Posterior vena cava (tissue), 2 donors: ENCODE measurements at regions of chr15 and their contacts with region 1.

Region 1: DNA sequence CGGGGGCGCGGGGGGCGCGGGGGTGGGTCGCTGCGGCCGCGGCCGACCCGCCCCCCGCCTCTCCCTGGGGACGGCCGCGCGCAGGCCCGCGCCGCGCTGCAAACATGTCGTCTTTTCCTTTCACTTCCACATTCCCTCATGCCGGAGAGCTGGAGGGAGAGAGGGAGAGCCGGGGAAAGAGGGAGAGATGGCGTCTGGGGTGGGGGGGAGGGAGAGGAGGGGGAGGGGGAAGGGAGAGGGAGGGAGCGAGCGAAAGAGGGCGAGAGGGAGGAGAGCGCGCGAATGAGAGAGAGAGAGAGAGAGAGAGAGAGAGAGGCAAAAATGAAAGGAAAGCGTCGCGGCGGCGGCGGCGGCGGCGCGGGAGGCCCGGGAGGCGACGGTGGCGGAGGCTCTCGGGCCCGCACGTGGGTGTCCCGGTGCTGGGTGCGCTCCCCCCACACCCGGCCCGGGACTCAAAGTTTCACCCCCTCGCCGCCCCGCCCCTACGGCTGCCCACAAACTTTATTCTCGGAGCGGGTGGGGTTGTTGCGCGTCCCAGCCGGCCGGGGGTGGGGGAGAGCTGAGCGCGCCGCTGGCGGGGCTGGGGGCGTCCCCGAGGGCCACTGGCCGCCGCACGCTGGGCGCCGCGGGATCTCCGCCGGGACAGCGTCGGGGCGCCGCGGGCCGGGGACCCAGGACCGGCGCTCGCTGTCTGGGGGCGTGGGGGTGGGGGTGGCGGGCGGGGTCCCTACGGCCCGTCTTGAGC is 731 bp downstream of the ZNF710 start:
- DNase-seq: peak; percentile 89

Region 2: DNA sequence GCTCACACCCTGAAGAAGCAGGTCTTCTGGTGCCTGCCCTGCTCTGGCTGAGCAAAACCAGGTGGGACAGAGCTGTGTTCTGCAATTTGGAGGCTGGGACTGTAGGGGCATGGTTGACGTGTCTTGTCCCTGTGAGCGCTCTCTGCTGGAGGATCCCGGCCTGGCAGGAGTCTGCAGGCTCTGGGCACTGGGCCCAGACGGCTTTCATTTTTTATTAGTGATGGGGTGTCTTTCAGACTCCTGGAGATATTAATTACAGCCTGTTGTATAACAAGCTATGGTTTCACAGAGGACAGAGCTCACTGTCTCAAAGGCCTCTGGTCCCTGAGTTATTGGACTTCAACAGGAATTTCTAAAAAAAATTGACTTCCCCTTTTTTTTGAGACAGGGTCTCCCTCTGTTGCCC is 30.3 kb before region 1 on chr15:
- intact Hi-C with region 1: no loop called
- DNase-seq: peak; percentile 71

Region 3: DNA sequence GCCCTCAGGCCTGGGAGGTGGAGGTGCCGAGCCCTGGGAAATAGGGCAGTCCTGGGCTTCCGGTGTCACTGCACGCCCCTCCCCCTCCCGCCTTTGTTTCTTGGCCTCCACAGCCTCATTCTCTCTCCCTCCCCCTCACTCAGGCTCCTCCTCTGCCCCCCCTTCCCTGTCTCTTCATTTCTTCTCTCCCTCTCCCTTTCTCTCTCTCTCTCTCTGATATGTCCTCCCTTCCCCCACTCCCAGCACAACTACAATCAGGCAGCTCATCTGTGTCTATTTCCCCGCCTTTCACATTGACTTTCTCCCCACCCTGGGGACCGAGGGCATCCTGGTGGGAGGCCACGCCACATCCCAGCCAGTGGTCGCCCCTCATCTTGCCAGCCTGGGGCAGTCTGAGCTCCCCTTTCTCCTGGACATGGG is 60.2 kb after region 1 on chr15:
- intact Hi-C with region 1: loop called in 1 of 2 experiments (anchors 10 kb)
- DNase-seq: no peak

Region 4: DNA sequence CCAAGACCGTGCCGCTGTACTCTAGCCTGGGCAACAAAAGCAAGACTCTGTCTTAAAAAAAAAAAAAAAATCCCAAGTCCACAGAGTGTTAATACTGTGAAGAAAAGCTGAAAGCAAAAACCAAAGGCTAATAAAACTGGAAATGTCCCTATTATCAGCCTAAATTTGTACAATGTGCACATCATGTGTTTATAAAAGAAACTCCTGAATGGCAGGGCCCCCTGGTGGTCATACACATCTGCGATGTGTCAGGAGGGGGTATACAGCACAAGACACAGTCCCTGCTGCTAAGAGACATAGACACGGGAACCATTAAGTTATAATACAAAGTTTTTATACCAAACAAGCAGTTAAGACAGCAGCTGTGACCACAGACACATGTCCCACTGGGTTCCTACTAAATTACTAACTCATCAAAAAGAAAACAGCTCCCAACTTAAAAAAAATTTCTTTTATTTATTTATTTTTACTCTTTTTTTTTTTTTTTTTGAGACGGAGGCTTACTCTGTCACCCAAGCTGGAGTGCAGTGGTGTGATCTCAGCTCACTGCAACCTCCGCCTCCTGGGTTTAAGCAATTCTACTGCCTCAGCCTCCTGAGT is 69.5 kb after region 1 on chr15:
- intact Hi-C with region 1: loop called (anchors 5 to 10 kb)
- DNase-seq: peak; percentile 93

Region 5: DNA sequence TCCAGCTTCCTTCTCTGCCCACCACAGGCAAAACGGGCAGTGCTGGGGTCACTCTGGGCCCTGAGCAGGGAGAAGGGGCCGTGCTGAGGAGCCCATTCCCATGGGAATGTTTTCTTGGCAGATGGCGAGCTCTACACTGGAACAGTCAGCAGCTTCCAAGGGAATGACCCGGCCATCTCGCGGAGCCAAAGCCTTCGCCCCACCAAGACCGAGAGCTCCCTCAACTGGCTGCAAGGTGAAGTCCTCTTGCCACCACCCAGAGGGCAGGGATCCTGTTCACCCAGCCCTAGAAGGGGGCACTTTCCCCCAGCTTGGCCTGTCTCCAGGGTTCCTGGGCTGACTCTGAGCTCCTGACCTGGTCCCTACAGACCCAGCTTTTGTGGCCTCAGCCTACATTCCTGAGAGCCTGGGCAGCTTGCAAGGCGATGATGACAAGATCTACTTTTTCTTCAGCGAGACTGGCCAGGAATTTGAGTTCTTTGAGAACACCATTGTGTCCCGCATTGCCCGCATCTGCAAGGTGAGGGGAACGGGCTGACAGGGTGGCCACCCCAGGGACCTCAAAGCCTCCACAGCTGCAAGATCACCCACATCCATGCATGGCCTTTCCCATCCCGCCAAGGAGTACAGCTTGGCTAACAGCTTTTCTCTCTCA is 219.5 kb after region 1 on chr15:
- intact Hi-C with region 1: loop called in 1 of 2 experiments (anchors 10 kb)
- DNase-seq: peak; percentile 94